H1 (cell line): ENCODE measurements at regions of chr10 and their contacts with region 1.

Region 1: GRCh38 chr10:29392376-29393021 is 103.6 kb downstream of the LYZL1 start:
- DNase-seq: peak in 1 of 2 experiments; percentile 69
- H3K4me3 ChIP-seq: no peak overlapping the region
- H3K27ac ChIP-seq: no peak overlapping the region
- H3K4me1 ChIP-seq: 0 out of 7 replicates have a peak, but pooled peaks cover 0 to 3% (median 0%) of the 10 kb centered on the region in 4 experiments
- H3K27me3 ChIP-seq: no peaks in the 10 kb centered on the region
- CTCF ChIP-seq: peak; percentile 8 to 76 (median 67)
- EP300 ChIP-seq: no peak
- POLR2A ChIP-seq: no peak
- RAD21 ChIP-seq: peak; percentile 64 to 75

Region 2: GRCh38 chr10:29377333-29377961 is 15.1 kb before region 1 on chr10:
- CTCF ChIA-PET with region 1: interaction called, 52 read pairs
- POLR2A ChIA-PET with region 1: interaction called, 4 read pairs
- DNase-seq: no peak
- H3K4me3 ChIP-seq: no peak overlapping the region
- H3K27ac ChIP-seq: no peak overlapping the region
- H3K4me1 ChIP-seq: peaks cover 0 to 5% (median 0%) of the 10 kb centered on the region in 4 experiments; a peak in 2 of 7 replicates
- H3K27me3 ChIP-seq: no peaks in the 10 kb centered on the region
- CTCF ChIP-seq: peak in 2 of 3 experiments; percentile 34 to 59; a peak in 3 of 4 replicates
- EP300 ChIP-seq: no peak
- POLR2A ChIP-seq: no peak
- RAD21 ChIP-seq: peak; percentile 51 to 53

Region 3: GRCh38 chr10:29409241-29410057 is 16.9 kb after region 1 on chr10:
- CTCF ChIA-PET with region 1: interaction called, 13 read pairs
- POLR2A ChIA-PET with region 1: no interaction called
- DNase-seq: no peak
- H3K4me3 ChIP-seq: no peak overlapping the region
- H3K27ac ChIP-seq: no peak overlapping the region
- H3K4me1 ChIP-seq: no peaks in the 10 kb centered on the region
- H3K27me3 ChIP-seq: no peaks in the 10 kb centered on the region
- CTCF ChIP-seq: no peak
- EP300 ChIP-seq: no peak
- POLR2A ChIP-seq: no peak
- RAD21 ChIP-seq: no peak

Region 4: GRCh38 chr10:29841724-29842649 is 449.5 kb after region 1 on chr10:
- CTCF ChIA-PET with region 1: no interaction called
- POLR2A ChIA-PET with region 1: no interaction called
- DNase-seq: peak in 1 of 2 experiments; percentile 50
- H3K4me3 ChIP-seq: no peak overlapping the region
- H3K27ac ChIP-seq: no peak overlapping the region; the same call in 1 of the 2 replicates
- H3K4me1 ChIP-seq: peaks cover 0 to 6% (median 3%) of the 10 kb centered on the region in 4 experiments; a peak in 3 of 7 replicates
- H3K27me3 ChIP-seq: no peaks in the 10 kb centered on the region
- CTCF ChIP-seq: peak; percentile 24 to 60 (median 34); a peak in 3 of 4 replicates
- EP300 ChIP-seq: no peak
- POLR2A ChIP-seq: no peak
- RAD21 ChIP-seq: peak; percentile 41 to 58